ENCODE measurements at regions of chr1 and their contacts with region 1.

Region 1: DNA sequence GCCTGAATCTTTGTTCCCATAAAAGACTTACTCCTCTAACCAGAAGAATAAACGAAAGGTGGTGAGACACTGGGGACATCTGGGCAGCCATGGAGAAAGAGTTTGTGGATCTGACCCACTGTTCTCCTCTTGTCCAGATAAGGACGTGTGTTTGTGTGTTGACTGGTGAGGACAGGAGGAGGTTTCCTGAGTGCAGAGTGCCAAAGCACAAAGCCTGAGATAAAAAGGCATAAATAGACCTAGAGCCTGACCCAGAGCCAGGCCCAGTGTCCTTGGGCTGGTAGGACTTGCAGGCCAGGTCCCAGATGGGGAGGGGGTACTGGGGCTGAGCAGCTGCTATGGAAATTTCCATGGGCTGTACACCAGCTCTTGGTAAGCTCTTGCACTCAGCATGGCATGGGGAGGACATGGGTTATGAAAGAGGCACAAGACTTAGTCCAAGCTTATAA is 19.6 kb upstream of the COQ8A start:
- DNase-seq: peak; percentile 62 to 85 (median 83)
- ATAC-seq: peak; percentile 94
- H3K4me3 ChIP-seq: no peak overlapping the region
- H3K27ac ChIP-seq: peak overlapping the region; percentile 98
- H3K4me1 ChIP-seq: peaks cover 11% of the 10 kb centered on the region
- H3K27me3 ChIP-seq: no peaks in the 10 kb centered on the region

Region 2: GRCh38 chr1:226814751-226815496 is 105.5 kb before region 1 on chr1:
- intact Hi-C with region 1: no loop called
- DNase-seq: peak in 2 of 3 donors; percentile 38 to 69
- ATAC-seq: peak; percentile 77 to 84
- H3K4me3 ChIP-seq: no peak overlapping the region
- H3K27ac ChIP-seq: peak overlapping the region; percentile 84
- H3K4me1 ChIP-seq: peaks cover 2% of the 10 kb centered on the region
- H3K27me3 ChIP-seq: no peaks in the 10 kb centered on the region

Region 3: DNA sequence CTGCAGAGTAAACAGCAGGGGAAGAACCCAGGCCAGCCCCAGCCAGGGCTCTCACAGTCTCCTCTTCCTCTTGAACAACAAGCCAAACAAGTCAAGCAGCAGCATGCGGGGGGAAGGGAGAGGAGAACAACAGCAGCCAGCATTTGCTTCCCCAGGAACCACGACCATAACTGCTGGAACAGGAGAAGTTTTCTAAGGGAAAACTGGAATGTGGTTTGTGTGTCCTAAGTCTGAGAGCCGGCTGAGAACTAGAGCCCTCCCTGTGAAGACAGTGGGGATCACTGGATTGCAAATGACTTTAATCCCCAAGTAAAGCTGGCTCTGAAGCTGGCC is 67.8 kb after region 1 on chr1:
- intact Hi-C with region 1: loop called in 2 of 4 experiments (anchors 5 kb)
- DNase-seq: peak in 1 of 3 donors; percentile 46
- ATAC-seq: no peak
- H3K4me3 ChIP-seq: no peak overlapping the region
- H3K27ac ChIP-seq: peak overlapping the region; percentile 54
- H3K4me1 ChIP-seq: peaks cover 11% of the 10 kb centered on the region
- H3K27me3 ChIP-seq: no peaks in the 10 kb centered on the region

Measured in right cardiac atrium (tissue), 5 donors.